ENCODE measurements at regions of chr1 and their contacts with region 1.

Region 1: DNA sequence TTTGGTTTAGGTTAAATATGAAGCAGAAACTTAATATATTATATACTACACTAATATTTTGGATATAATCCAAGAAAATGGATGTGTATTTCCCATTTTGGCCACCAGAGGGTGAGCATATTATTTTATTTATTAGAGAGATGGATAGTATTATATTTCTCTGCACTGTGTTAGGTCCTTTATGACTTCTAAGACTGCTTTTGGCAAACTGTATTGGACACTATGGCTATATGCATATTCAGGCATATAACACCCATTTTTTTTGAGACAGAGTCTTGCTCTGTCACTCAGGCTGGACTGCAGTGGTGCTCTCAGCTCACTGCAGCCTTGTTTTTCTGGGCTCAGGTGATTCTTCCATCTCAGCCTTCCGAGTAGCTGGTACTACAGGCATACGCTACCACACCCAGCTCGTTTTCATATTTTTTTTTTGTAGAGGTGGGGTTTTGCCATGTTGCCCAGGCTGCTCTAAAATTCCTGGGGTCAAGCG is 17.8 kb upstream of the PGM1 start:
- DNase-seq: no peak
- H3K4me3 ChIP-seq: no peak overlapping the region
- H3K27ac ChIP-seq: no peak overlapping the region
- H3K4me1 ChIP-seq: peaks cover 0 to 14% (median 12%) of the 10 kb centered on the region in 4 experiments
- H3K27me3 ChIP-seq: no peaks in the 10 kb centered on the region
- CTCF ChIP-seq: peak in 2 of 3 experiments; percentile 20 to 36; a peak in 2 of 4 replicates
- EP300 ChIP-seq: no peak
- POLR2A ChIP-seq: no peak
- RAD21 ChIP-seq: no peak

Region 2: DNA sequence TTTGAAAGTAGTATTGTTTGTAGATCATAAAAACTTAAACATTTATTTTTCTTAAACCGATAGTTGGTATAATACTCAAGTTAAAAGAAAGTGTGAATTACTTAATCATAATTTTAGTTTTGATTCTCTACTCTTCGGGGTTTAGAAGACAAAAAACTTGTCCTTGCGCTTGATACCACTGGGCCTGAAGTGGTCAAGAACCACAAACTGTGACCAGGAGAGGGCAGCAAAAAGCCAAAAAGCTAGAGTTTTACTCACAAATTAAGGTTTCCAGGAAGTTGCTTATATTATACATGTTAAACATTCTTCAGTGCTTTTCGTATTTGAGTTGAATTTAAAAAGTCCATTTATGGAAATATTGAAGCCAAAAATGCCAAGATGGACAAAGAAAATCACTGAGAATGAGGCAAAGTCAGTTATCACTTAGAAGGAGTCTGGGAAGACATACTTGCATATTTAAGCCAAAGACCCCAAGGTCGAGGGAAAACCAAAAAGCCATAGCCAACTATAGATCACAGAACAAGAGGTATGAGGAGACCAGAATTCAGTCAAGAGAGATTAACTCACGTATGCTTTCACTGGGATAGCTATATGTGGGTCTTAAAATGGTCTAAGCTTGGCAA is 17.9 kb before region 1 on chr1:
- CTCF ChIA-PET with region 1: interaction called, 153 read pairs
- POLR2A ChIA-PET with region 1: no interaction called
- DNase-seq: peak in 1 of 2 experiments; percentile 72
- H3K4me3 ChIP-seq: no peak overlapping the region
- H3K27ac ChIP-seq: no peak overlapping the region
- H3K4me1 ChIP-seq: peaks cover 0 to 4% (median 0%) of the 10 kb centered on the region in 4 experiments; a peak in 1 of 7 replicates
- H3K27me3 ChIP-seq: no peaks in the 10 kb centered on the region
- CTCF ChIP-seq: peak; percentile 12 to 71 (median 71)
- EP300 ChIP-seq: no peak
- POLR2A ChIP-seq: no peak
- RAD21 ChIP-seq: peak; percentile 64 to 76

Region 3: GRCh38 chr1:63593303-63593885 is 18.0 kb after region 1 on chr1 and contains the start of gene PGM1:
- CTCF ChIA-PET with region 1: interaction called, 55 read pairs
- POLR2A ChIA-PET with region 1: interaction called, 6 read pairs
- DNase-seq: peak; percentile 50 to 84
- H3K4me3 ChIP-seq: peak within 1 kb of the TSS; percentile 81 to 89 (median 85)
- H3K27ac ChIP-seq: no peak within 1 kb of the TSS; the same call in 1 of the 2 replicates
- H3K4me1 ChIP-seq: peaks cover 0 to 3% (median under 1%) of the 10 kb centered on the region in 4 experiments; a peak in 2 of 7 replicates
- H3K27me3 ChIP-seq: no peaks in the 10 kb centered on the region
- CTCF ChIP-seq: no peak
- EP300 ChIP-seq: no peak
- POLR2A ChIP-seq: no peak; a peak in 2 of 3 replicates
- RAD21 ChIP-seq: no peak
- total RNA-seq, gene PGM1: 60.2 and 65.4 TPM in 2 replicates

Region 4: GRCh38 chr1:63607322-63607721 is 31.9 kb after region 1 on chr1:
- CTCF ChIA-PET with region 1: interaction called, 15 read pairs
- POLR2A ChIA-PET with region 1: interaction called, 3 read pairs
- DNase-seq: no peak
- H3K4me3 ChIP-seq: no peak overlapping the region
- H3K27ac ChIP-seq: no peak overlapping the region
- H3K4me1 ChIP-seq: peaks cover 0 to 5% (median 0%) of the 10 kb centered on the region in 4 experiments; a peak in 1 of 7 replicates
- H3K27me3 ChIP-seq: no peaks in the 10 kb centered on the region; a peak in 1 of 7 replicates
- CTCF ChIP-seq: no peak
- EP300 ChIP-seq: no peak
- POLR2A ChIP-seq: no peak
- RAD21 ChIP-seq: no peak